Prostate gland (tissue), 2 donors: ENCODE measurements at regions of chr1 and their contacts with region 1.

Region 1: GRCh38 chr1:68590473-68590872 is 93.6 kb upstream of the DEPDC1 start:
- DNase-seq: no peak
- H3K4me3 ChIP-seq: no peak overlapping the region
- H3K27ac ChIP-seq: no peak overlapping the region
- H3K4me1 ChIP-seq: no peaks in the 10 kb centered on the region
- H3K27me3 ChIP-seq: no peaks in the 10 kb centered on the region
- CTCF ChIP-seq: peak in 1 of 4 experiments; percentile 6
- POLR2A ChIP-seq: no peak

Region 2: GRCh38 chr1:68470388-68470970 is 120.0 kb before region 1 on chr1:
- intact Hi-C with region 1: loop called (anchors 5 kb)
- DNase-seq: no peak
- H3K4me3 ChIP-seq: no peak overlapping the region
- H3K27ac ChIP-seq: no peak overlapping the region
- H3K4me1 ChIP-seq: no peaks in the 10 kb centered on the region
- H3K27me3 ChIP-seq: no peaks in the 10 kb centered on the region
- CTCF ChIP-seq: peak in 3 of 4 experiments; percentile 27 to 37 (median 37)
- POLR2A ChIP-seq: no peak

Region 3: DNA sequence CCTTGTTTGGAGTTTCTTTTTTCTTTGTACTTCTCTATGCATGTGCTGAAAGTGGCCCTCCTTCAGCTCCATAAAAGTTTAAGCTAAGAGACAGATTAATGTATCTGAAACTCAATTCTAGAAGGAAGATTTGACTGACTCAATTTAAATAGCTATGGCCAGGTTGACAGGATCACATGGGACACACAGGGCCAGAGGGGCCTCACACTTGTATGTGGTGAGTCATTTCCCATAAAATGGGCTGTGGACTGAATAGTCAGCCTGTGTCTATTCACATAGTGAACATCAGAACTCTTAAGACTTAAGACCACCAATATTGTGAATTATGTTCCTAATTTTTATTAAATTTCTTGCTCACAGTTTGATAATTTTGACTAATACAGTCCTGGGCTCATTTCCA is 47.9 kb before region 1 on chr1:
- intact Hi-C with region 1: no loop called
- DNase-seq: no peak
- H3K4me3 ChIP-seq: no peak overlapping the region
- H3K27ac ChIP-seq: no peak overlapping the region
- H3K4me1 ChIP-seq: no peaks in the 10 kb centered on the region
- H3K27me3 ChIP-seq: no peaks in the 10 kb centered on the region
- CTCF ChIP-seq: no peak
- POLR2A ChIP-seq: no peak